ENCODE measurements at regions of chr1 and their contacts with region 1.

Region 1: GRCh38 chr1:160376525-160377131 is 9.8 kb downstream of the NHLH1 start:
- DNase-seq: peak; percentile 55
- H3K4me3 Mint-ChIP-seq: no peak overlapping the region
- H3K27ac Mint-ChIP-seq: no peak overlapping the region
- H3K4me1 Mint-ChIP-seq: peaks cover 13% of the 10 kb centered on the region
- H3K27me3 Mint-ChIP-seq: no peaks in the 10 kb centered on the region

Region 2: GRCh38 chr1:159881930-159882839 is 494.4 kb before region 1 on chr1:
- CTCF ChIA-PET with region 1: no interaction called
- intact Hi-C with region 1: no loop called
- DNase-seq: peak; percentile 47
- H3K4me3 Mint-ChIP-seq: no peak overlapping the region
- H3K27ac Mint-ChIP-seq: no peak overlapping the region
- H3K4me1 Mint-ChIP-seq: no peaks in the 10 kb centered on the region
- H3K27me3 Mint-ChIP-seq: no peaks in the 10 kb centered on the region

Region 3: GRCh38 chr1:160078512-160079195 is 298.0 kb before region 1 on chr1:
- CTCF ChIA-PET with region 1: interaction called, 10 read pairs
- intact Hi-C with region 1: no loop called
- DNase-seq: peak; percentile 77
- H3K4me3 Mint-ChIP-seq: no peak overlapping the region
- H3K27ac Mint-ChIP-seq: no peak overlapping the region
- H3K4me1 Mint-ChIP-seq: no peaks in the 10 kb centered on the region
- H3K27me3 Mint-ChIP-seq: peaks cover 40% of the 10 kb centered on the region

Region 4: GRCh38 chr1:160085686-160086455 is 290.8 kb before region 1 on chr1:
- CTCF ChIA-PET with region 1: interaction called, 29 read pairs
- intact Hi-C with region 1: loop called (anchors 1 kb)
- DNase-seq: peak; percentile 88
- H3K4me3 Mint-ChIP-seq: no peak overlapping the region
- H3K27ac Mint-ChIP-seq: no peak overlapping the region
- H3K4me1 Mint-ChIP-seq: peaks cover 5% of the 10 kb centered on the region
- H3K27me3 Mint-ChIP-seq: peaks cover 17% of the 10 kb centered on the region

Region 5: GRCh38 chr1:160354388-160354985 is 22.1 kb before region 1 on chr1:
- CTCF ChIA-PET with region 1: interaction called, 34 read pairs
- intact Hi-C with region 1: no loop called
- DNase-seq: peak; percentile 22
- H3K4me3 Mint-ChIP-seq: no peak overlapping the region
- H3K27ac Mint-ChIP-seq: no peak overlapping the region
- H3K4me1 Mint-ChIP-seq: no peaks in the 10 kb centered on the region
- H3K27me3 Mint-ChIP-seq: no peaks in the 10 kb centered on the region

Region 6: DNA sequence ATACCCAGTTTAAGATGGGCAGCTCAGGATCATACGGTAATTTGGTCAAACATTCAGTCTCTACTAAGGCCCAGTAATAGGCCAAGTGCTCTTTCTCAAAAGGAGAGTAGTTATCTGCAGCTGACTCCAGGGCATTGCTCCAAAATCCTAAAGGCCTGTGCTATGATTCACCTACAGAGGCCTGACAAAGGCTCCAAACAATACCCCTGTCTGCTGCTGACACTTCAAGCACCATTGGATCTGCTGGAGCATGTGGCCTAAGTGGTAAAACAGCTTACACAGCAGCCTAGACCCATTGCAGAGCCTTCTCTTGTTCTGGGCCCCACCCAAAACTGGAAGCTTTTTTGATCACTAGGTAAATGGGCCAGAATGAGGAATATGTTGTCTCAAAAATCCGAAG is 385.3 kb after region 1 on chr1:
- CTCF ChIA-PET with region 1: no interaction called
- intact Hi-C with region 1: no loop called
- DNase-seq: no peak
- H3K4me3 Mint-ChIP-seq: no peak overlapping the region
- H3K27ac Mint-ChIP-seq: no peak overlapping the region
- H3K4me1 Mint-ChIP-seq: peaks cover 42% of the 10 kb centered on the region
- H3K27me3 Mint-ChIP-seq: no peaks in the 10 kb centered on the region